Naive thymus-derived CD4-positive, alpha-beta T cell (primary cell): ENCODE measurements at regions of chr11 and their contacts with region 1.

Region 1: GRCh38 chr11:85647604-85648299 is at the start of gene TMEM126A:
- DNase-seq: peak; percentile 85 to 92 (median 90)
- ATAC-seq: peak; percentile 99
- H3K4me3 ChIP-seq: peak within 1 kb of the TSS; percentile 83
- H3K4me3 Mint-ChIP-seq: peak within 1 kb of the TSS; percentile 92 to 100 (median 98)
- H3K27ac ChIP-seq: peak within 1 kb of the TSS; percentile 87
- H3K27ac Mint-ChIP-seq: peak within 1 kb of the TSS; percentile 86 to 99 (median 98)
- H3K4me1 ChIP-seq: peaks cover 11 to 14% of the 10 kb centered on the region in 2 donors
- H3K4me1 Mint-ChIP-seq: peaks cover 9 to 48% (median 38%) of the 10 kb centered on the region in 7 donors
- H3K27me3 ChIP-seq: no peaks in the 10 kb centered on the region
- H3K27me3 Mint-ChIP-seq: peaks cover 12 to 29% (median 22%) of the 10 kb centered on the region in 5 donors
- total RNA-seq, gene TMEM126A: 17.8 to 40.8 (median 18.9) TPM

Region 2: GRCh38 chr11:85627998-85628770 is 19.6 kb before region 1 on chr11 and contains the start of gene TMEM126B:
- CTCF ChIA-PET with region 1: interaction called, 6 read pairs
- POLR2A ChIA-PET with region 1: interaction called, 102 read pairs
- intact Hi-C with region 1: loop called (anchors 1 kb)
- DNase-seq: peak; percentile 85 to 95 (median 94)
- ATAC-seq: peak; percentile 99
- H3K4me3 ChIP-seq: peak within 1 kb of the TSS; percentile 98
- H3K4me3 Mint-ChIP-seq: peak within 1 kb of the TSS; percentile 84 to 98 (median 94)
- H3K27ac ChIP-seq: peak within 1 kb of the TSS; percentile 85
- H3K27ac Mint-ChIP-seq: peak within 1 kb of the TSS; percentile 89 to 97 (median 94)
- H3K4me1 ChIP-seq: peaks cover 13 to 22% of the 10 kb centered on the region in 2 donors
- H3K4me1 Mint-ChIP-seq: peaks cover 17 to 67% (median 48%) of the 10 kb centered on the region in 7 donors
- H3K27me3 ChIP-seq: no peaks in the 10 kb centered on the region
- H3K27me3 Mint-ChIP-seq: peaks cover 0 to 9% (median 0%) of the 10 kb centered on the region in 5 donors
- total RNA-seq, gene TMEM126B: 22.1 to 50.4 (median 36.4) TPM

Region 3: GRCh38 chr11:86483940-86484794 is 836.4 kb after region 1 on chr11:
- CTCF ChIA-PET with region 1: no interaction called
- POLR2A ChIA-PET with region 1: no interaction called
- intact Hi-C with region 1: no loop called
- DNase-seq: no peak
- ATAC-seq: no peak
- H3K4me3 ChIP-seq: no peak overlapping the region
- H3K4me3 Mint-ChIP-seq: no peak overlapping the region
- H3K27ac ChIP-seq: no peak overlapping the region
- H3K27ac Mint-ChIP-seq: no peak overlapping the region
- H3K4me1 ChIP-seq: peaks cover 0 to 17% of the 10 kb centered on the region in 2 donors
- H3K4me1 Mint-ChIP-seq: peaks cover 0 to 13% (median 0%) of the 10 kb centered on the region in 7 donors
- H3K27me3 ChIP-seq: no peaks in the 10 kb centered on the region
- H3K27me3 Mint-ChIP-seq: peaks cover 0 to 3% (median 0%) of the 10 kb centered on the region in 5 donors